ENCODE measurements at regions of chr11 and their contacts with region 1.

Region 1: DNA sequence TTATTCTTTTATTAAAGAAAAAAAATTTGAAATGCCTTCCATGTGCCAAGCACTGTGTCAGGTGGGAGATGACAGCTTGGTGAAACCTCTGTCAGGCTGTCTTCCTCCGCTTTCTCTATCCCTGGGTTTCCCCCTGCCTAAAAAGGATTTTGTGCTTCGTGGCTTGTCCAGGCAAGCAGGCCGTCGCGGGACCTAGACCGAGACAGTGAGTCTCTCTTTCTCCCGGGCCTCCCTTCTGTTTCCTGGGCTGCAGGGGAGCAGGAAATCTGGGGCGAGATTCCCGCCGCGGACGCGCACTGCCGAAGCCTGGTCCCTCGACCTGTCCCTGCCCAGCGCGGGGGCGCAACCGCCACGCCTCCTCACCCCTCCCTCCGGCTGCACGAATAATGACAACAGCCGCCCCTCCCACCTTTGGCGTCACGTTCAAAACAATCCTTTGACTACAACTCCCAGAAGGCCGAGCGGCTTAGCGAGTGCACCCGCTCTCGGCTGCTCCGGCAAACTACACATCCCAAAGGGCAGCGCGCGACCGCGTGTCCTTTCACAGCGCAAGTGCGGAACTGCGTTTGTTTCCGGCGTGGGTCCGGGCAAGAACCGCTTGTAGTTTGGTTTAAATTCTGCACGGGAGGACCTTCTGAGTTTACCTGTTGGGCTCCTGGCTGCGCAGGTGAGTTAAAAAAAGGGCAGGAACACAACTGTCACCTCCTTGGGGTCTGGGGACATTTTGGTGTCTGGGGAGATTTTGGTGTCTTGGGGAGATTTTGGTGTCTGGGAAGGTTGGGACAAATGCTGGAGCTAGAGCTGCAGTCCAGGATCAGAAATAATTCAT is at the start of gene CLP1:
- DNase-seq: peak; percentile 99
- ATAC-seq: peak; percentile 98
- H3K4me3 Mint-ChIP-seq: peak within 1 kb of the TSS; percentile 100
- H3K27ac Mint-ChIP-seq: peak within 1 kb of the TSS; percentile 96
- H3K4me1 Mint-ChIP-seq: peaks cover 46% of the 10 kb centered on the region
- H3K27me3 Mint-ChIP-seq: no peaks in the 10 kb centered on the region
- total RNA-seq, gene CLP1: 18.9 to 20.5 TPM

Region 2: DNA sequence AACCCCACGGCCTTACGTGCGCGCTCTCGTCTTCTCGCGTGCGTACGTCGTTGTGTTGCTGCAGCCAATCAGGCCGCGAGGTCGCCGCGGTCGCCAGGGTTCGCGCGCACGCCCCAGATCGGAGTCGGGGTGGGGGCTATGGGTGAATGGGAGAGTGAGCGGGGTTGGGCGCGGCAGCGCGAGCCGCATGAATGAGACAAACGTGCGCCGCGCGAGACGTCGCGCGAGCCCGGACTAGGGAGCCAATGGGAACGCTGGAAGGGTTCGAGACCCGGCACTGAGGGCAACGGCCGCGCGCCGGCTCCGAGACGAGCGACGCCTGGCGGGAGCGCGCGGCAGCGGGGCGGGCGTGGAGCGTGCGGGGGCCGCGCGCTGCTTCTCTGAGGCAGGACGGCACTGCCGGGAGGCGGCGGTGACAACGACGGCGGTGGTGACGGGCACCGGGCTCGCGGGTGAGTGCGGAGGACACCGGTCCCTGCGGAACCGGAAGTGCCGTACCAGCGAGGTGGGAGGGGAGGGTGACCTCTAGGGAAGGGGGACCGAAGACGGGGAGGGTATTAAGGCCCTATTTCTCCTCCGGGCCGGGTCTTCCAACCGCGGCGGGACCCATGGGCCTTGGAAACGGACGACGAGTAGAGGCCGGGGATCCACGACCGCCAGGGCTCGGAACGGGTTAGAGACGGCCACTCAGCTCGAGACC is 10.5 kb after region 1 on chr11 and contains the start of gene ZDHHC5:
- CTCF ChIA-PET with region 1: interaction called, 11 read pairs
- POLR2A ChIA-PET with region 1: interaction called, 4 read pairs
- DNase-seq: peak; percentile 100
- ATAC-seq: peak; percentile 92
- H3K4me3 Mint-ChIP-seq: peak within 1 kb of the TSS; percentile 96
- H3K27ac Mint-ChIP-seq: peak within 1 kb of the TSS; percentile 99
- H3K4me1 Mint-ChIP-seq: peaks cover 45% of the 10 kb centered on the region
- H3K27me3 Mint-ChIP-seq: no peaks in the 10 kb centered on the region
- total RNA-seq, gene ZDHHC5: 77.8 to 82.4 TPM

Measured in activated CD8-positive, alpha-beta T cell treated with anti-CD3 and anti-CD28 coated beads, Interleukin-2, amount 10 ng/mL, durations not matched to agents 7 days and 5 days (primary cell).